ENCODE measurements at regions of chr16 and their contacts with region 1.

Region 1: GRCh38 chr16:58661199-58661830 is 23.3 kb downstream of the SLC38A7 start:
- DNase-seq: peak; percentile 60
- ATAC-seq: peak; percentile 77
- H3K4me3 ChIP-seq: no peak overlapping the region
- H3K4me3 Mint-ChIP-seq: no peak overlapping the region
- H3K27ac ChIP-seq: no peak overlapping the region
- H3K27ac Mint-ChIP-seq: no peak overlapping the region
- H3K4me1 ChIP-seq: no peaks in the 10 kb centered on the region
- H3K4me1 Mint-ChIP-seq: no peaks in the 10 kb centered on the region
- H3K27me3 ChIP-seq: no peaks in the 10 kb centered on the region
- H3K27me3 Mint-ChIP-seq: peaks cover 7% of the 10 kb centered on the region
- CTCF ChIP-seq: peak; percentile 48

Region 2: GRCh38 chr16:57955572-57956188 is 705.6 kb before region 1 on chr16:
- CTCF ChIA-PET with region 1: no interaction called
- POLR2A ChIA-PET with region 1: no interaction called
- intact Hi-C with region 1: no loop called
- DNase-seq: no peak
- ATAC-seq: no peak
- H3K4me3 ChIP-seq: no peak overlapping the region
- H3K4me3 Mint-ChIP-seq: no peak overlapping the region
- H3K27ac ChIP-seq: no peak overlapping the region
- H3K27ac Mint-ChIP-seq: no peak overlapping the region
- H3K4me1 ChIP-seq: no peaks in the 10 kb centered on the region
- H3K4me1 Mint-ChIP-seq: no peaks in the 10 kb centered on the region
- H3K27me3 ChIP-seq: no peaks in the 10 kb centered on the region
- H3K27me3 Mint-ChIP-seq: peaks cover 9% of the 10 kb centered on the region
- CTCF ChIP-seq: no peak

Region 3: GRCh38 chr16:58336332-58337089 is 324.8 kb before region 1 on chr16:
- CTCF ChIA-PET with region 1: interaction called, 27 read pairs
- POLR2A ChIA-PET with region 1: no interaction called
- intact Hi-C with region 1: loop called (anchors 1 kb)
- DNase-seq: peak; percentile 81
- ATAC-seq: peak; percentile 77
- H3K4me3 ChIP-seq: peak overlapping the region in 2 of 5 experiments; percentile 18 to 23
- H3K4me3 Mint-ChIP-seq: peak overlapping the region; percentile 46
- H3K27ac ChIP-seq: no peak overlapping the region
- H3K27ac Mint-ChIP-seq: no peak overlapping the region
- H3K4me1 ChIP-seq: peaks cover 0 to 8% of the 10 kb centered on the region in 2 donors
- H3K4me1 Mint-ChIP-seq: peaks cover 7% of the 10 kb centered on the region
- H3K27me3 ChIP-seq: no peaks in the 10 kb centered on the region
- H3K27me3 Mint-ChIP-seq: no peaks in the 10 kb centered on the region
- CTCF ChIP-seq: peak; percentile 95

Measured in B cell (primary cell).